ENCODE measurements at regions of chr6 and their contacts with region 1.

Region 1: GRCh38 chr6:108902382-108902792 is 54.2 kb downstream of the ARMC2 start:
- DNase-seq: no peak
- H3K4me3 Mint-ChIP-seq: no peak overlapping the region
- H3K27ac Mint-ChIP-seq: no peak overlapping the region
- H3K4me1 Mint-ChIP-seq: peaks cover 9% of the 10 kb centered on the region
- H3K27me3 Mint-ChIP-seq: no peaks in the 10 kb centered on the region
- CTCF ChIP-seq: no peak

Region 2: DNA sequence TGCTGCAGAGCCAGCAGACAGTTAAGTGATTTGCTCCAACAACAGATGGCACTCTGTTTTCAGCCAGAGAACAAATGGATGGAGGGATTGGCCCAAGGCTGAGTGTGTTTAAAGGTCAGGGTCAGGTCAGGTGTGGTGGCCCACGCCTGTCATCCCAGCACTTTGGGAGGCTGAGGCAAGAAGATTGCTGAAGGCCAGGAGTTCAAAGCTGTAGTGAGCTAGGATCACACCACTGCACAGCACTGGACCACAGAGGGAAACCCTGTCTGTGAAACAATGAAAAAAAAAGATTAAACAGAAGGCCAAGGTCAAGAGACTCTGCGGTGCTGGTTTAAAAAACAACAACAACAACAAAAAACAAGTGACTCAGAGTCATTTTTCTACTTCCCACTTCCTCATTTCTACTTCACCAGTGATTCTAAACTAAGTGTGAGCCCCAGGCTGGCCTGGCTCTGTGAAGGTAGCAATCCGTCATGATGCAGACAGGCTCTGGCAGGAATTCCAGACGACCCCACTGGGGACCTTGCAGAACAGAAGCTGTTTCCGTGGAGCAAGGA is 96.7 kb before region 1 on chr6:
- CTCF ChIA-PET with region 1: no interaction called
- intact Hi-C with region 1: no loop called
- DNase-seq: no peak
- H3K4me3 Mint-ChIP-seq: no peak overlapping the region
- H3K27ac Mint-ChIP-seq: no peak overlapping the region
- H3K4me1 Mint-ChIP-seq: no peaks in the 10 kb centered on the region
- H3K27me3 Mint-ChIP-seq: no peaks in the 10 kb centered on the region
- CTCF ChIP-seq: no peak

Region 3: DNA sequence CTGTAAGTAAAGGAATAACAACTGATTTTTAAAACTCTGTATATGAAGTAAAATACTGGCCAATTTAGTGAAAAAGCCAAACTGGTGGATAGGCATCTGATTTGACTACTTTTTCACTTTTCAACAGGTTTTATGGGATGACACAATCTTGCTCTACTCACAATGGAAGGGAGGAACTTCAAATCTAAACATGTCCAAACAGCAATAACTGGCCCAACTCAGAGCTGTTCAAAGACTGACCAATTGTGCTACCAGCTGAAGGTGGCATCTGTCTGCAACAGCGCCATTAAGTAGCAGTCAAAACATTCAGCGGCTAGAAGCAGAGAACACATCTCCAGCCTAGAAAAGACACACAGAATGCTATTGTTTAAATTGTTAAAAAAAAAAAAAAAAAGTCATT is 147.6 kb after region 1 on chr6:
- CTCF ChIA-PET with region 1: no interaction called
- intact Hi-C with region 1: loop called (anchors 2 kb)
- DNase-seq: no peak
- H3K4me3 Mint-ChIP-seq: no peak overlapping the region
- H3K27ac Mint-ChIP-seq: no peak overlapping the region
- H3K4me1 Mint-ChIP-seq: no peaks in the 10 kb centered on the region
- H3K27me3 Mint-ChIP-seq: no peaks in the 10 kb centered on the region
- CTCF ChIP-seq: no peak

Measured in Calu3 (cell line).